IMR-90 (cell line): ENCODE measurements at regions of chr11 and their contacts with region 1.

Region 1: GRCh38 chr11:9943386-9944110 is 279.7 kb downstream of the SWAP70 start:
- DNase-seq: peak; percentile 97
- ATAC-seq: peak; percentile 80
- H3K4me3 ChIP-seq: no peak overlapping the region
- H3K27ac ChIP-seq: peak overlapping the region; percentile 91; the same call in 1 of the 2 replicates
- H3K4me1 ChIP-seq: peaks cover 6% of the 10 kb centered on the region
- H3K27me3 ChIP-seq: no peaks in the 10 kb centered on the region
- CTCF ChIP-seq: no peak
- POLR2A ChIP-seq: no peak
- RAD21 ChIP-seq: no peak

Region 2: DNA sequence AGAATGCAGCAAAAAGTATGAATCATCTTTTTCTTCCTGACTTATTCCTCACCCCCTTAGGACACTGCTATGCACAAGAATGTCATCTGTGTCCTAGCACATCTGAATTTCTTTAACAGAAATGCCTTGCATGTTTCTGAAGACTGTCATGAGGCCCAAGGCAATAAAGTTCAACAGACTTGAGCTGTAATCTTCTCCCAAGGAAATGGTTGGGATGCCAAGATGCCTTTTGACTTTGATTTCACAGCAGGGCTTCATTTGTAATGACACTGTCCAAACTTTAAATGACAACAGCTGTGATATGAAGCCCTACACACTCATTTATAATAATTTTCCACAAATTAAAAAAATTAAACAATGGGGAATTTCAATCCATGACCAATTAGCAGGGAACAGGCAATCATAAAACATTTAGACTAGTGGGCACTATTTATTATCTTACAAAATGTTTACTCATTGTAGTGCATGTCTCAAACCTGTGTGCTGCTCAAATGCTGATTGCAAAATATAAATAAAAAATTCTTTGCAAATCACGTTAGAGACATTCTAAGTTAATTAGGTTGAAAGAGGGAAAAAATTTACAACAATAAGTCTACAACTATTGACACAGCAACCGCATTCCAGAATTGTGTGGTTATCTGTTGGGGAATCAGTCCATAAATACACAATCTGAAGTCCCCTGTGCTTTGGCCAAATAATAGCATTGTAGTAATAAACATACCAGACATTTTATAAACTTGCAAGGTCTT is 37.3 kb before region 1 on chr11:
- CTCF ChIA-PET with region 1: interaction called, 3 read pairs
- POLR2A ChIA-PET with region 1: no interaction called
- dilution Hi-C with region 1: no loop called
- in situ Hi-C with region 1: no loop called
- intact Hi-C with region 1: loop called (anchors 2 kb)
- DNase-seq: peak; percentile 94
- ATAC-seq: peak; percentile 92
- H3K4me3 ChIP-seq: no peak overlapping the region
- H3K27ac ChIP-seq: peak overlapping the region; percentile 92; the same call in 1 of the 2 replicates
- H3K4me1 ChIP-seq: peaks cover 11% of the 10 kb centered on the region
- H3K27me3 ChIP-seq: no peaks in the 10 kb centered on the region
- CTCF ChIP-seq: no peak
- POLR2A ChIP-seq: no peak
- RAD21 ChIP-seq: no peak